ENCODE measurements at regions of chr17 and their contacts with region 1.

Region 1: DNA sequence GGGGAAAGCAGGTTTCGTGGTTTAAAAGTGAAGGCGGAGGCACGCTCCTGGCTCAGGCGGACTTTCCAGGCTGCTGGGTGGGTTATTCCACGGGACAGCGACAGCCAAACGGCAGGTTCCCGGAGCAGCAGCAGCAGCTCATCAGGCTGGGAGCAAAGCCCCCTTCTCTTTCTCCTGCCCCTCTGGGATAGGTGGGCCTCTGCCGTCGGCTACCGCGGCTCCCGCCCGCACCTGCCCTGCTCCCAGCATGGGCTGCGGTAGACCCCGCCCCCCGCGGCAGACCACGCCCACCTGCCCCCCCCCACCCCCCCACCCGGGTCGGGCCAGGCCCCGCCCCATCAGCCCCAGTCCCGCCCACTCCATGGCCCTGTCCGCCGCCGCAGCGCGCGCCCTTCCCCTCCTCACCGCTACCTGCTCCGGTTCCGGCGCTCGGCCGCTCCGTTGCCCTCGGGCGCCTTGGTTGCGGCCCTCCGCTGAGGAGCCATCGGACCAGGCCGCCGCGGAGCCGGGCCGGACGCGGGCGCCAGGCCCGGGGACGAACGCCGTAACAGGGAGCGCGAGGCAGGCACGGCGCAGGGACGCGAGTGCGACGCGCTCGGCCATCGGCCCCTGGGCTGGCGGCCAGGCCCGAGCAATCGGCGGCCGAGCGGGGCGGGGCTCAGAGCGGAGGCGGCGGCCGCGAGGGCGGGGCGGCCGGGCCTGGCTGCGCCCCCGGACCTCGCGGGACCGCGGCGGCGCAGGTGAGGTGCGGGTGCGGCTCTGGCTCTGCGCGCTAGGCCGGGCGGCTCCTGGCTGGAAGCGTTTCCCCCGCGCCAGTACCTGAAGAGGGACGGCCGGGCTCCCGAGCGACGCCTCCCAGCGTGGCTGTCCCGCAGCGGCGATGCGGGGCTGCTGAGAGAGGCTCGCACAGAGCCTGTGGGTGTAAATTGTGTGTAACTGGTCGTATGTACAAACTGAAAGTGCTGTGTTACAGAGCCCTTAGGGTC is at the starts of genes HEXD and OGFOD3:
- DNase-seq: peak; percentile 91
- ATAC-seq: peak; percentile 88
- H3K4me3 Mint-ChIP-seq: peak within 1 kb of the TSS; percentile 73
- H3K27ac Mint-ChIP-seq: peak within 1 kb of the TSS; percentile 42
- H3K4me1 Mint-ChIP-seq: peaks cover 21% of the 10 kb centered on the region
- H3K27me3 Mint-ChIP-seq: no peaks in the 10 kb centered on the region
- total RNA-seq, gene HEXD: 23.3 to 26.0 TPM
- total RNA-seq, gene OGFOD3: 20.0 to 22.3 TPM

Region 2: DNA sequence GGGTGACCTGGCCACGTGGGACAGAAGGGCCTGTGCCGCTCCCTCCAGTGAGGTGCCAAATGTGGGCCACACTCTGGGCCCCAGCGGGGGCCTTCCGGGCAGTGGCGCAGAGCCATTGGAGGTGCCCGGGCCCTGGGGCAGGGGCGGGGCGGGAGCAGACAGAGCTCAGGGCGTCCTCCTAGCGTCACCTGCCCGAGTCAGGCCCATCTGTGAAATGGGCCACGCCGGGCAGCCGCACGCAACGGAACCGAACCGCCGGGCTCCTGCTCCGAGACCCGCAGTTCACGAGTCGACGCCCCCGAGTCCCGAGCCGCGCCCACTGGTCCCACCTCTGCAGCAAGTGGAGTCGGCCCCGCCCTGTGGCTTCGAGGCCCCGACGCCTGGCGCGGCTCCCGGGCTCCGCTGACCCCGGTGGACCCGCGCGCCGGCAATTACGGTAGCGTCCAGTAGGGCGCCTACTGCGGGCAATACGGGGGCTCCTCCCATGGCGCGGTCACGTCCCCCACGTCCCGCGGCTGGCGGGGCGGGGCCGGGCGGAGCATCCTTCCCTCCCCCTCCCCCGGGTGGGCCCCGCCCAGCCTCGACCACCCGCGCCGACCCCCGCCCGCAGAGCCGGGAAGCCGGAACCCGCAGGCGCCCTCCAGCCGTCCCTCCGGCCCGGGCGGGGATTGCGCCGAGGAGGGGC is 187.5 kb before region 1 on chr17:
- CTCF ChIA-PET with region 1: interaction called, 4 read pairs
- POLR2A ChIA-PET with region 1: no interaction called
- intact Hi-C with region 1: loop called in 1 of 2 experiments (anchors 10 kb)
- DNase-seq: peak; percentile 85
- ATAC-seq: peak; percentile 45
- H3K4me3 Mint-ChIP-seq: peak overlapping the region; percentile 79
- H3K27ac Mint-ChIP-seq: peak overlapping the region; percentile 75
- H3K4me1 Mint-ChIP-seq: peaks cover 9% of the 10 kb centered on the region
- H3K27me3 Mint-ChIP-seq: no peaks in the 10 kb centered on the region

Region 3: GRCh38 chr17:82273327-82274133 is 144.8 kb before region 1 on chr17 and contains the start of gene CSNK1D:
- CTCF ChIA-PET with region 1: no interaction called
- POLR2A ChIA-PET with region 1: no interaction called
- intact Hi-C with region 1: loop called in 1 of 2 experiments (anchors 1 kb)
- DNase-seq: peak; percentile 96
- ATAC-seq: peak; percentile 81
- H3K4me3 Mint-ChIP-seq: peak within 1 kb of the TSS; percentile 90
- H3K27ac Mint-ChIP-seq: peak within 1 kb of the TSS; percentile 94
- H3K4me1 Mint-ChIP-seq: peaks cover 39% of the 10 kb centered on the region
- H3K27me3 Mint-ChIP-seq: no peaks in the 10 kb centered on the region
- total RNA-seq, gene CSNK1D: 118 to 182 TPM

Region 4: GRCh38 chr17:82457997-82458864 is 39.9 kb after region 1 on chr17 and contains the start of gene NARF:
- CTCF ChIA-PET with region 1: interaction called, 5 read pairs
- POLR2A ChIA-PET with region 1: no interaction called
- intact Hi-C with region 1: loop called in 1 of 2 experiments (anchors 1 kb)
- DNase-seq: peak; percentile 98
- ATAC-seq: peak; percentile 99
- H3K4me3 Mint-ChIP-seq: peak within 1 kb of the TSS; percentile 79
- H3K27ac Mint-ChIP-seq: peak within 1 kb of the TSS; percentile 99
- H3K4me1 Mint-ChIP-seq: peaks cover 28% of the 10 kb centered on the region
- H3K27me3 Mint-ChIP-seq: no peaks in the 10 kb centered on the region
- total RNA-seq, gene NARF: 65.4 to 85.9 TPM

Region 5: DNA sequence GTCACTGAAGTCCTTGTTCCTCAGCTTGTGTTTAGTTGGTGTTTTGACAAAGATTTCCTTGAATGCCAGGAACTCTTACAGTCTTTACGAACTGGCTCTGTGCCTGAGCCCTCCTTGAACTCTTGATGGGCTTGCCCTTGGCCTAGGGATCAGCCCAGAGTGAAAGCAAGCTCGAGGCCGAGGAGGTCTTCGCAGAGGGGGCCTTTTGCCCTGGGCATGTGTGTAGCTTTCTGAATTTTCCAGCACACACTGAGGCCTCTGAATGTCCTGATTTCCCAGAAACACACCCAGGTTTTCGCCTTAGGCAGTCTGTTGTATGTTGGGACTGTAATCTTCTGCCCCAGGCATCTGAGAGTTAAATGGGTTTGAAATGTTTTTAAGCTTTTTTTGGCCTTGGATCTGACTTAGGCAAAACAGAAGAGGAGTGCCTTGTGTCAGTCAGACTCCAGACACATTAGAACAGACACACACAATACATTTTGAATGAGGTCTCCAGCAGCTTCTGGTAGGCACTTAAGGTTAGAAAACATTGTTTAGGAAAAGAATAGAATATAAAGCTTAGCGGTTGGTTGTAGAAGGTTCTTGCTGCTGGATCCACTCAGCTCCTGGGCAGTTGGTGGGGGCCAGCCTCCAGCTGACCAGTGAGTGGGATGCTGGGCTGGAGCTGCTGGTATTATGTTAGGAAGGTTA is 118.4 kb after region 1 on chr17:
- CTCF ChIA-PET with region 1: no interaction called
- POLR2A ChIA-PET with region 1: no interaction called
- intact Hi-C with region 1: no loop called
- DNase-seq: no peak
- ATAC-seq: no peak
- H3K4me3 Mint-ChIP-seq: peak overlapping the region; percentile 33
- H3K27ac Mint-ChIP-seq: peak overlapping the region; percentile 86
- H3K4me1 Mint-ChIP-seq: peaks cover 51% of the 10 kb centered on the region
- H3K27me3 Mint-ChIP-seq: no peaks in the 10 kb centered on the region

Region 6: GRCh38 chr17:82551779-82552457 is 133.6 kb after region 1 on chr17:
- CTCF ChIA-PET with region 1: interaction called, 3 read pairs
- POLR2A ChIA-PET with region 1: no interaction called
- intact Hi-C with region 1: loop called in 1 of 2 experiments (anchors 2 kb)
- DNase-seq: peak; percentile 90
- ATAC-seq: peak; percentile 100
- H3K4me3 Mint-ChIP-seq: no peak overlapping the region
- H3K27ac Mint-ChIP-seq: peak overlapping the region; percentile 56
- H3K4me1 Mint-ChIP-seq: peaks cover 41% of the 10 kb centered on the region
- H3K27me3 Mint-ChIP-seq: no peaks in the 10 kb centered on the region

Region 7: GRCh38 chr17:82710499-82711232 is 292.4 kb after region 1 on chr17:
- CTCF ChIA-PET with region 1: no interaction called
- POLR2A ChIA-PET with region 1: no interaction called
- intact Hi-C with region 1: no loop called
- DNase-seq: no peak
- ATAC-seq: no peak
- H3K4me3 Mint-ChIP-seq: no peak overlapping the region
- H3K27ac Mint-ChIP-seq: no peak overlapping the region
- H3K4me1 Mint-ChIP-seq: peaks cover 7% of the 10 kb centered on the region
- H3K27me3 Mint-ChIP-seq: no peaks in the 10 kb centered on the region

Region 8: DNA sequence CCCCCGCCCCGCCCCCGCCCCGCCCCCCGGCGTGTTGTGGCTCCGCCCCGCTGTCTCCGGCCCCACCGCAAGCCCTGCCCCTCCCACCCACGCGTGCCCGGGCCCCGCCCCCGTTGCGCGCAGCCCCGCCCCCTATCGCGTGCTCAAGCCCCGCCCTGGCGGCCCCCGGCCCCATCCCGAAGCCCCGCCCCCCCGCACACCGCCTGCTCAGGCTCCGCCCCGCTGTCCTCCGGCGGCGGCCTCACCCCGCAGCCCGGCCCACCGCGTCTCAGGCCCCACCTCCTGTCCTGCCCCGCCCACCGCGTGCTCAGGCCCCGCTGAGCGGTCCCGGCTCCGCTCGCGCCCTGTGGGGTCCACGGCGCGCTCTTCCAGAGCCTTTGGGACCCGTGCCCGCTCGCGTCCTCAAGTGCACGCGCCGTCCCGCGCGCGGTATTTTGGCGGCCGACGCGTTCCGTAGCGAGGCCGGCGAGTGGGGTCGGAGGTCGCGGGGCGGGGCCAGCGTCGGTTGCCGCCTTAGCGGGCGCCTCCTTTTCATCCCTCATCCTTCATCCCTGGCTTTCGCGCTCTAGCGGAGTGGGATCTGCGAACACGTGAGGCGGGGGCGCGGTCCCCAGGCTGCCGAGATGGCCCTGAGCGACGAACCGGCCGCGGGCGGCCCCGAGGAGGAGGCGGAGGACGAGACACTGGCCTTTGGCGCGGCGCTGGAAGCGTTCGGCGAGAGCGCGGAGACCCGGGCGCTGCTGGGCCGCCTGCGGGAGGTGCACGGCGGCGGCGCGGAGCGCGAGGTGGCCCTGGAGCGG is 333.5 kb after region 1 on chr17 and contains the start of gene TBCD:
- CTCF ChIA-PET with region 1: no interaction called
- POLR2A ChIA-PET with region 1: no interaction called
- intact Hi-C with region 1: loop called in 1 of 2 experiments (anchors 1 kb)
- DNase-seq: peak; percentile 95
- ATAC-seq: peak; percentile 83
- H3K4me3 Mint-ChIP-seq: peak within 1 kb of the TSS; percentile 84
- H3K27ac Mint-ChIP-seq: peak within 1 kb of the TSS; percentile 13
- H3K4me1 Mint-ChIP-seq: peaks cover 26% of the 10 kb centered on the region
- H3K27me3 Mint-ChIP-seq: no peaks in the 10 kb centered on the region
- total RNA-seq, gene TBCD: 83.3 to 97.2 TPM